ENCODE measurements at regions of chr10 and their contacts with region 1.

Region 1: GRCh38 chr10:44830022-44830421 is 81.1 kb upstream of the TMEM72 start:
- DNase-seq: peak; percentile 96
- ATAC-seq: peak; percentile 94
- H3K4me3 ChIP-seq: peak overlapping the region; percentile 2; the same call in 1 of the 2 replicates
- H3K27ac ChIP-seq: peak overlapping the region; percentile 67
- H3K4me1 ChIP-seq: peaks cover 30% of the 10 kb centered on the region
- H3K27me3 ChIP-seq: no peaks in the 10 kb centered on the region
- CTCF ChIP-seq: no peak

Region 2: DNA sequence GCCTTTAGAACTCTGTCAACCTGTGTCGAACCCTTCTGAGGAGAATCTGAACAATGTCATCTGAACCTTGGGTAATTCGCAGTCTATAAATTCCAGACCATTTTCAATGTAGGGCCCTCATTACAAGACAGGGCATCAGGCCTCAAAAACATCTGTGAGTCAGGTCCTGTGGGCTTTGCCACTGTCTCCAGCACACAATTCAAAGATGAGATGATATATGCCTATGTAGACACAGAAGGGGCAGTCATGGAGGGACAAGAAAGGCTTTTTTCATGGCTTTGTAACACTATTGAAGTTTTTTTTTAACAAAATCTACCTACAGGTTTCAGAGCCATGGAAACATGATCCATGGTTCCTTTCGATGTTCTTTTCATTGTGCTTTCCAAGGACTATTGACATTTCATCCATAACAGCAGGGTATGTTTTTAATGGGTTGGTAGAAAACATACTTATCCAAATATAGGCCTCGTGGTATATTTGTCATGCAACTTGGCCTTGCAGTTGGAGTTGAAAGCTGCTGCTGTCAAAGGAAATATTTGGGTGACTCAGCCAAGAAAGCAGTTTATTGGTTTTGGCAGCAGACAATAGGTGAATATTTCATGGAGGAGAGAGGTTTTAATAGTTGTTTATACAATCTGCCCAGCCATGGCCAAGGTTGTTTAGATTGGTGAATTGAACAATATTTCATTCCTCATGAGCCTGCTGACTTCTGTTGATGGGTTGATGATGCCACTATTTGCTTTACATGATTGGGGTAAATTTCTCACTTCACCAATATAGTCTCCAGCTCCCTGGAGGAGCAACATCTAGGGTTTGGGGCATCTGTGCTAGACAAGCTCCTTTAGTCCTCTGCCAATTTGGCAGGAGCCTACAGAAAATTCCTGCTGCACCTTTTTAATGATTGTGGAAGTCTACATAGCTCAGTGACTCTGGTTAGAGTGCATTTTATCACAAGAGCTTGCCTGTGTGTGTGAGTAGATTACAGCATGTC is 77.3 kb before region 1 on chr10:
- CTCF ChIA-PET with region 1: no interaction called
- POLR2A ChIA-PET with region 1: no interaction called
- intact Hi-C with region 1: loop called (anchors 10 kb)
- DNase-seq: peak; percentile 98
- ATAC-seq: peak; percentile 82
- H3K4me3 ChIP-seq: peak overlapping the region; percentile 8; the same call in 1 of the 2 replicates
- H3K27ac ChIP-seq: peak overlapping the region; percentile 85
- H3K4me1 ChIP-seq: peaks cover 38% of the 10 kb centered on the region
- H3K27me3 ChIP-seq: no peaks in the 10 kb centered on the region
- CTCF ChIP-seq: no peak